Posterior vena cava (tissue), 2 donors: ENCODE measurements at regions of chr6 and their contacts with region 1.

Region 1: GRCh38 chr6:134816780-134817179 is 133.1 kb downstream of the ALDH8A1 start:
- DNase-seq: no peak

Region 2: GRCh38 chr6:134938896-134939295 is 122.1 kb after region 1 on chr6:
- intact Hi-C with region 1: loop called in 1 of 2 experiments (anchors 2 kb)
- DNase-seq: no peak

Region 3: DNA sequence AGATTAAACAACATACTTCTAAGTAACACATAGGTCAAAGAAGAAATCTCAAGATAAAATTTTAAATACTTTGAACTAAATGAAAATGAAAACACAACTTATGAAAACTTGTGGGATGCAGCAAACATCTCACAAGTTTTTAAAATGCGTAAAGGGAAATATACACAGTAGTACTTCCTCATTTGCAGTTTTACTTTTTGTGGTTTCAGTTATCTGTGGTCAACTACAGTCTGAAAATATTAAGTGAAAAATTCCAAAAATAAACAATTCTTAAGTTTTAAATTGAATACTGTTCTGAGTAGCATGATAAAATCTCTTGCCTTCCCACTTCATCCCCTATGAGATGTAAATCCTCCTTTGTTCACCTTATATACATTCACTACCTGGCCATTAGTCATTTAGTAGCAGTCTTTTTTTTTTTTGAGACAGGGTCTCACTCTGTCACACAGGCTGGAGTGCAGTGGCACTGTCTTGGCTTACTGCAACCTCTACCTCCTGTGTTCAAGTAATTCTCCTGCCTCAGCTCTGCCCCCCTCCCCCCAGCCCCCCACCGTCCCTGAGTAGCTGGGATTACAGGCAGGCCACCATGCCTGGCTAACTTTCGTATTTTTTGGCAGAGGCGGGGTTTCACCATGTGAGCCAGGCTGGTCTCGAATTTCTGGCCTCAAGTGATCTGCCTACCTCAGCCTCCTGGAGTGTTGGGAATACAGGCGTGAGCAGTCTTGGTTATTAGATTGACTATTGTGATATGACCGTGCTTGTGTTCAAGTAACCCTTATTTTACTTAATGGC is 835.4 kb after region 1 on chr6:
- intact Hi-C with region 1: no loop called
- DNase-seq: no peak